ENCODE measurements at regions of chr1 and their contacts with region 1.

Region 1: DNA sequence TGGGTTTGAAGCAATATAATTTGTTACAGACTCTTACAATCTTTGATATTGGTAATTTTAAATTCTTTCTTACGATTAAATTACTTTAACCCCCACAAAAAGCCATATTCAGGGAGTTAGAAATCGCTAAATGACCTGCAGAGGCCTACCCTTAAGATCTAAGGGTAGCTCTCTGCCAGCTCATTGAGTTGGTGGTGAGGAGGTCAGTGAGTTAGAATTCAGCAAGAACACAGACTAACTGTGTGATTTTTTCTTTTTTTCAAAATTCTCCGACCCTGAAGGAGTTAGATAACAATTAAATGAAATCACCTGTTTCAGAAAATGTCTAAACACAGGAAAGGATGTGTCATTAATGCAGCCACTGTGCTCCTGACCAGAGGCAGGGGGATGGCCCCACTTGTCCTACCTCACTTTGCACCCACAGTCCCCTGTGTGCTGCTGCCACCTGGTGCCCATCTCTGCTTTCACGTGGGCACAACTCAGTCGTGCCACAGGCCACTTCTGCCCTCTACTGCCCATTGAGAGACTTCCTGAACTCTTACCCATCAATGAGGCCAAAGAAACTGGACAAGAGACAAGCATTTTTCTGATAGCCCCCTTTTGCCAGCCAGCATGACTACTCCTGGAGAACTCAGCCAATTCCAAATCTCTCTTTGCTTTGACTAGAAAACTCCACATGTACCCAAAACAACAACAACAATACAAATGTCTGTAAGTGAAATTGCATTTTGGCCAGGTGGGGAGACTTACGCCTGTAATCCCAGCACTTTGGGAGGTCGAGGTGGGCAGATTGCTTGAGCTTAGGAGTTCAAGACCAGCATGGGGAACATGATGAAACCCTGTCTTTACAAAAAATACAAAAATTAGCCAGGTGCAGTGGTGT is 8.4 kb downstream of the CFAP45 start:
- DNase-seq: peak; percentile 53 to 76 (median 65)
- ATAC-seq: peak; percentile 96
- H3K4me3 ChIP-seq: no peak overlapping the region
- H3K4me3 Mint-ChIP-seq: no peak overlapping the region
- H3K27ac ChIP-seq: no peak overlapping the region
- H3K27ac Mint-ChIP-seq: peak overlapping the region in 1 of 9 donors; percentile 37
- H3K4me1 ChIP-seq: peaks cover 0 to 17% of the 10 kb centered on the region in 2 donors
- H3K4me1 Mint-ChIP-seq: peaks cover 0 to 19% (median 0%) of the 10 kb centered on the region in 7 donors
- H3K27me3 ChIP-seq: no peaks in the 10 kb centered on the region
- H3K27me3 Mint-ChIP-seq: peaks cover 0 to 24% (median 0%) of the 10 kb centered on the region in 5 donors

Region 2: GRCh38 chr1:159780583-159781582 is 110.6 kb before region 1 on chr1 and contains the start of gene DUSP23:
- CTCF ChIA-PET with region 1: interaction called, 7 read pairs
- POLR2A ChIA-PET with region 1: no interaction called
- intact Hi-C with region 1: loop called (anchors 1 kb)
- DNase-seq: peak; percentile 88 to 96 (median 96)
- ATAC-seq: peak; percentile 97
- H3K4me3 ChIP-seq: peak within 1 kb of the TSS; percentile 69
- H3K4me3 Mint-ChIP-seq: peak within 1 kb of the TSS; percentile 78 to 93 (median 84)
- H3K27ac ChIP-seq: peak within 1 kb of the TSS; percentile 66
- H3K27ac Mint-ChIP-seq: peak within 1 kb of the TSS; percentile 2 to 94 (median 85)
- H3K4me1 ChIP-seq: peaks cover 6% of the 10 kb centered on the region in 2 donors
- H3K4me1 Mint-ChIP-seq: peaks cover 9 to 33% (median 28%) of the 10 kb centered on the region in 7 donors
- H3K27me3 ChIP-seq: no peaks in the 10 kb centered on the region
- H3K27me3 Mint-ChIP-seq: peaks cover 0 to 11% (median 0%) of the 10 kb centered on the region in 5 donors
- total RNA-seq, gene DUSP23: 7.4 to 18.9 (median 12.2) TPM

Region 3: DNA sequence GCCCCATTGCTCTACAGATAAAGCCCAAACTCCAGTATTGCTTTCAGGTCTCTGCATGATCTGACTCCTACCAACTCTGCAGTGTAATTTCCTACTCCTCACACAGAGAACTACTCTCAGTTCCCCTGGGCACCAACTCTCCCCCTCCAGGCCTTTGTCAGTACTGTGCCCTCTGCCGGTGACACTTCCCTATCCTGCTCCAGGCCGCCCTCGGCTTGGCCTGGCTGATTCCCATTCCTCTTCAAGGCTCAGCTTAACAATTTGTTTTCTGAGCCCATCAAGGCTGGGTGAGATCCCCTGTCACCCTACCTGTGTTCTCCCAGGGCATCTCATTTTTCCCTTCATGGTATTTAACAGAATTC is 62.3 kb before region 1 on chr1:
- CTCF ChIA-PET with region 1: interaction called, 3 read pairs
- POLR2A ChIA-PET with region 1: no interaction called
- intact Hi-C with region 1: loop called in 1 of 2 experiments (anchors 2 kb)
- DNase-seq: no peak
- ATAC-seq: peak; percentile 79
- H3K4me3 ChIP-seq: no peak overlapping the region
- H3K4me3 Mint-ChIP-seq: peak overlapping the region in 4 of 10 donors; percentile 9 to 78 (median 44)
- H3K27ac ChIP-seq: no peak overlapping the region
- H3K27ac Mint-ChIP-seq: peak overlapping the region in 3 of 9 donors; percentile 3 to 32 (median 9)
- H3K4me1 ChIP-seq: peaks cover 31 to 45% of the 10 kb centered on the region in 2 donors
- H3K4me1 Mint-ChIP-seq: peaks cover 44 to 57% (median 48%) of the 10 kb centered on the region in 7 donors
- H3K27me3 ChIP-seq: no peaks in the 10 kb centered on the region
- H3K27me3 Mint-ChIP-seq: peaks cover 0 to 39% (median 0%) of the 10 kb centered on the region in 5 donors

Region 4: DNA sequence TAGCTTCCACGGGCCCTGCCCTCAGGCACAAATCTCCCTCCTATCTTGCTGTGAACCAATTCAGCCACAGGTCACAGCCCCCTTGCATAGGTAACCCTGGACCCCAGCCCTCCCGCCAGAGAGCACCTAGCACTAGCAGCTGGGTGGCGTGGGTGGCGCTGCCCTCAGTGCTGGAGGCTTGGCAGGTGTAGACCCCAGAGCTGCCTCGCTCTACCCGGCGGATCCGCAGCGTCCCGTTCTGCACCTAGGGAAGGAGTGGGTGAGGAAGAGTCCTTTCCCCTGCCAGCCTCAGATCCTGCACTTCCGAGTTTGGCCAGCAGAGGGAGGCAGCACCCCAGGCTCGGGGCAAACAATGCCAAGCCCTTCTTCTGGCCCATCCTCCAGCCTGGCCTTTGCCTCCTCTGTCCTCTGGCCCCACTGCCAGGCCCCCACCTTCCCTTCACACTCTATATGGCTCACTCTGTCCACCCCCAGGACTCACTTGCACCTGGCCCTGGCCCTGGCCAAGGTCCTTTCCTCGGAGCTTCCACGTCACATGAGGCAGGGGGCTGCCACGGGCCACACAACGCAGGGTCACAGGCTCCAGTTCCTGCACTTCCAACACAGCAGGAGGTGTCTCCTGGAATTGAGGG is 44.9 kb after region 1 on chr1:
- CTCF ChIA-PET with region 1: interaction called, 4 read pairs
- POLR2A ChIA-PET with region 1: no interaction called
- intact Hi-C with region 1: loop called (anchors 1 to 2 kb)
- DNase-seq: peak; percentile 49 to 90 (median 74)
- ATAC-seq: peak; percentile 90
- H3K4me3 ChIP-seq: no peak overlapping the region
- H3K4me3 Mint-ChIP-seq: no peak overlapping the region
- H3K27ac ChIP-seq: no peak overlapping the region
- H3K27ac Mint-ChIP-seq: peak overlapping the region in 1 of 9 donors; percentile 17
- H3K4me1 ChIP-seq: no peaks in the 10 kb centered on the region
- H3K4me1 Mint-ChIP-seq: peaks cover 0 to 20% (median 11%) of the 10 kb centered on the region in 7 donors
- H3K27me3 ChIP-seq: no peaks in the 10 kb centered on the region
- H3K27me3 Mint-ChIP-seq: peaks cover 0 to 23% (median 8%) of the 10 kb centered on the region in 5 donors

Region 5: DNA sequence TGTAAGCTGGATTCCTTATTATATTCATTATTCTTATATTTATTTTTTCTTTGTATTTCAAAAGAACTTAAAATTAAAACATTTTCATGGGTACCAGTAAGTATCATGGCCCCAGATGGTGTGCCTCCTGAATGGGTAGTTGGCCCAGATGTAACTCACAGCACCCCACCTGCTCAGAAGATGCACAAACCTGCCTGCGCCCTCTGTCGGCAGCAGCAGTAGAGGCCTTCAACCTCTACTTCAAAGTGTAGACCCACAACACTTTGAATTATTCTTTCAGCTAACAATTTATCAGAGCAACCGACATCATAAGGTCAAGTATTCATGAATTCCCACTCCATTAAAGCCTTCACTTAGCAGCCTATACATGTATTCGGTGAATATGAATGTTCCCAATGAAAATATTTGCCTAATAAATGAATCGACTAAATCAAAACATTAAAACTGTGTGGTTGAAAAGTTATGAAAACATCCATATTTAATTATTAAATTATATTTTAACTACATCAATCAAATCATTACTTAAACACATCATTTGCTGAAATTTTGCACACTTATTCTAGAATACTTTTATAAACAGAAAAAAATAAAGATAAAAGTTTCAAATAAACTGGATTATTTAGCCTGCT is 114.9 kb after region 1 on chr1:
- CTCF ChIA-PET with region 1: interaction called, 19 read pairs
- POLR2A ChIA-PET with region 1: no interaction called
- intact Hi-C with region 1: loop called (anchors 1 kb)
- DNase-seq: peak; percentile 38 to 67 (median 61)
- ATAC-seq: peak; percentile 88
- H3K4me3 ChIP-seq: no peak overlapping the region
- H3K4me3 Mint-ChIP-seq: no peak overlapping the region
- H3K27ac ChIP-seq: no peak overlapping the region
- H3K27ac Mint-ChIP-seq: no peak overlapping the region
- H3K4me1 ChIP-seq: no peaks in the 10 kb centered on the region
- H3K4me1 Mint-ChIP-seq: no peaks in the 10 kb centered on the region
- H3K27me3 ChIP-seq: no peaks in the 10 kb centered on the region
- H3K27me3 Mint-ChIP-seq: peaks cover 0 to 33% (median 6%) of the 10 kb centered on the region in 5 donors

Region 6: GRCh38 chr1:160544647-160545046 is 653.1 kb after region 1 on chr1:
- CTCF ChIA-PET with region 1: no interaction called
- POLR2A ChIA-PET with region 1: no interaction called
- intact Hi-C with region 1: no loop called
- DNase-seq: peak in 7 of 9 donors; percentile 27 to 60 (median 51)
- ATAC-seq: peak; percentile 45
- H3K4me3 ChIP-seq: no peak overlapping the region
- H3K4me3 Mint-ChIP-seq: peak overlapping the region in 1 of 10 donors; percentile 24
- H3K27ac ChIP-seq: no peak overlapping the region
- H3K27ac Mint-ChIP-seq: peak overlapping the region; percentile 9 to 86 (median 74)
- H3K4me1 ChIP-seq: peaks cover 38 to 43% of the 10 kb centered on the region in 2 donors
- H3K4me1 Mint-ChIP-seq: peaks cover 43 to 61% (median 56%) of the 10 kb centered on the region in 7 donors
- H3K27me3 ChIP-seq: no peaks in the 10 kb centered on the region
- H3K27me3 Mint-ChIP-seq: no peaks in the 10 kb centered on the region

Measured in naive thymus-derived CD4-positive, alpha-beta T cell (primary cell).